Right ventricle myocardium inferior (tissue), 1 donor: ENCODE measurements at regions of chr11 and their contacts with region 1.

Region 1: DNA sequence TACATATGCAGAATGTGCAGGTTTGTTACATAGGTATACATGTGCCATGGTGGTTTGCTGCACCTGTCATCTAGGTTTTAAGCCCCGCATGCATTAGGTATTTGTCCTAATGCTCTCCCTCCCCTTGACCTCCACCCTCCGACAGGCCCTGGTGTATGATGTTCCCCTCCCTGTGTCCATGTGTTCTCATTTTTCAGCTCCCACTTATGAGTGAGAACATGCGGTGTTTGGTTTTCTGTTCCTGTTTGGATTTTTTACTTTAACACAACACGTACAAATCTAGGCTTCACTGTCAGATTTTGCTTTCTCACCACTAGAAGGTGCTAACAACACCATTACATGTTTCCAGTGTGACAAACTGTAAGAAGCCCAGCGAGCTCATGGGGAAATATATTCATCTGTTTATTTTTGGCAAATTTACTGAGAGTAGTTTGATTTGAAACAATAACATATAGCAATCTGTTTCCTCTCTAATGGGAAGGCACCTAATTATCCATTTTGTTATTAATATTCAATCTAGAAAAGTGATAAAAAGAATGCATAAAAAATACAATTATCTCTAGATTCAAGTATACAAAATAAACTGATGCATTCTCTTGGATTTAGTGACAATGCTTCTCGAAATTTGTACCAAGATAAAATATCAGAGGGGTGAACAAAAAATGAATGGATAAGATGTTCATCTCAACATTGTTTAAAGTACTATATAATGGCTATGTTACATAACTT is 23.2 kb upstream of the BIRC3 start:
- DNase-seq: no peak
- ATAC-seq: no peak

Region 2: GRCh38 chr11:102666331-102666957 is 372.4 kb after region 1 on chr11:
- intact Hi-C with region 1: loop called (anchors 10 kb)
- DNase-seq: no peak
- ATAC-seq: no peak